HepG2 (cell line): ENCODE measurements at regions of chr15 and their contacts with region 1.

Region 1: DNA sequence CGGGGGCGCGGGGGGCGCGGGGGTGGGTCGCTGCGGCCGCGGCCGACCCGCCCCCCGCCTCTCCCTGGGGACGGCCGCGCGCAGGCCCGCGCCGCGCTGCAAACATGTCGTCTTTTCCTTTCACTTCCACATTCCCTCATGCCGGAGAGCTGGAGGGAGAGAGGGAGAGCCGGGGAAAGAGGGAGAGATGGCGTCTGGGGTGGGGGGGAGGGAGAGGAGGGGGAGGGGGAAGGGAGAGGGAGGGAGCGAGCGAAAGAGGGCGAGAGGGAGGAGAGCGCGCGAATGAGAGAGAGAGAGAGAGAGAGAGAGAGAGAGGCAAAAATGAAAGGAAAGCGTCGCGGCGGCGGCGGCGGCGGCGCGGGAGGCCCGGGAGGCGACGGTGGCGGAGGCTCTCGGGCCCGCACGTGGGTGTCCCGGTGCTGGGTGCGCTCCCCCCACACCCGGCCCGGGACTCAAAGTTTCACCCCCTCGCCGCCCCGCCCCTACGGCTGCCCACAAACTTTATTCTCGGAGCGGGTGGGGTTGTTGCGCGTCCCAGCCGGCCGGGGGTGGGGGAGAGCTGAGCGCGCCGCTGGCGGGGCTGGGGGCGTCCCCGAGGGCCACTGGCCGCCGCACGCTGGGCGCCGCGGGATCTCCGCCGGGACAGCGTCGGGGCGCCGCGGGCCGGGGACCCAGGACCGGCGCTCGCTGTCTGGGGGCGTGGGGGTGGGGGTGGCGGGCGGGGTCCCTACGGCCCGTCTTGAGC is 731 bp downstream of the ZNF710 start:
- DNase-seq: peak; percentile 29
- ATAC-seq: peak; percentile 14
- H3K4me3 ChIP-seq: peak overlapping the region; percentile 71 to 86 (median 78); a peak in 5 of 6 replicates
- H3K27ac ChIP-seq: peak overlapping the region; percentile 97
- H3K4me1 ChIP-seq: peaks cover 78% of the 10 kb centered on the region
- H3K27me3 ChIP-seq: no peaks in the 10 kb centered on the region; a peak in 1 of 5 replicates
- CTCF ChIP-seq: no peak
- EP300 ChIP-seq: no peak
- POLR2A ChIP-seq: no peak; a peak in 1 of 4 replicates
- RAD21 ChIP-seq: peak; percentile 8; the same call in 1 of the 2 replicates

Region 2: GRCh38 chr15:89893696-89894455 is 108.0 kb before region 1 on chr15 and contains the start of gene AP3S2:
- CTCF ChIA-PET with region 1: no interaction called
- POLR2A ChIA-PET with region 1: interaction called, 10 read pairs
- in situ Hi-C with region 1: no loop called
- intact Hi-C with region 1: no loop called
- DNase-seq: peak; percentile 87
- ATAC-seq: peak; percentile 93
- H3K4me3 ChIP-seq: peak within 1 kb of the TSS; percentile 81 to 89 (median 89)
- H3K27ac ChIP-seq: peak within 1 kb of the TSS; percentile 88
- H3K4me1 ChIP-seq: peaks cover 24% of the 10 kb centered on the region
- H3K27me3 ChIP-seq: no peaks in the 10 kb centered on the region; a peak in 1 of 5 replicates
- CTCF ChIP-seq: no peak; the same call in none of the 2 replicates
- EP300 ChIP-seq: 0 out of 4 replicates have a peak, but pooled peaks of 1 of the 2 experiments have one; percentile 36
- POLR2A ChIP-seq: peak; percentile 78 to 93
- RAD21 ChIP-seq: 0 out of 2 replicates have a peak, but pooled peaks have one; percentile 33
- total RNA-seq, gene AP3S2: 44.4 and 69.5 TPM in 2 replicates

Region 3: DNA sequence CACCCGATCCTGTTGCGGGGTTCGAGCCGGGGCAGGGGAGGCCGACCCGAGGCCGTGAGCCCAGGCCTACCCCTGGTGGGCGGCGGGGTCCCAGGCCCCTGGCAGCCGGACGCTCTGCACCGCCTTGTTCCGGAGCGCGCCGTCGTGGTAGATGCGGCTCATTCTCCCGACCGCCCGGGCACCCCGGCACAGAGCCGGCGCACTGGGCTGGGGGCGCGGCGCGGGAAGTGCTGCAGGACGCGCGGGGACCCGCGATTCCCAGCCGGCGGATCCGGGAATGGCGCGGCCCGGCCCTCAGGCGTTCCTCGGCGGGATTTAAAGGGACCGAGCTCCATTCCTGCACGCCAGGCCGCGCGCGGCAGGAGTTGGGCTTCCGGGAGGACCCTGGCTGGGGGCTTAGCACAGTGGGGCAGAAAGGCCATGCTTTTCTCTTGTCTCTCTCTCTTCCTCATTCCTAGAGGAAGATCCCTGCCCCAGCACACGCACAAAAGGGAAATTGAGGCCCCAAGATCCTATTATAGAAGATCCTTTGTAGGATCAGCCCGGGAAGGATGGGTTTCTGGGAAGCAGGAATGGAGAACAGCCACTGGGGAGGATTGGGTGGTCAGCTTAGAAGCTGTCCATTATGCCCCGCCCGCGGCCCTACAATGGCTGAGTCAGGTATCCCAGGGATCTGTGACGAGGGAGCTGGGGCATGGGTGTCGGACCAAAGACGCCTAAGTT is 89.0 kb before region 1 on chr15 and contains the start of gene ARPIN:
- CTCF ChIA-PET with region 1: no interaction called
- POLR2A ChIA-PET with region 1: interaction called, 14 read pairs
- in situ Hi-C with region 1: no loop called
- intact Hi-C with region 1: loop called (anchors 10 kb)
- DNase-seq: peak; percentile 16
- ATAC-seq: peak; percentile 84
- H3K4me3 ChIP-seq: peak within 1 kb of the TSS; percentile 80 to 86 (median 84)
- H3K27ac ChIP-seq: peak within 1 kb of the TSS; percentile 58
- H3K4me1 ChIP-seq: peaks cover 24% of the 10 kb centered on the region
- H3K27me3 ChIP-seq: no peaks in the 10 kb centered on the region
- CTCF ChIP-seq: no peak
- EP300 ChIP-seq: no peak
- POLR2A ChIP-seq: peak in 1 of 2 experiments; percentile 46; a peak in 3 of 4 replicates
- RAD21 ChIP-seq: no peak
- total RNA-seq, gene ARPIN: 5.0 and 5.3 TPM in 2 replicates

Region 4: GRCh38 chr15:90016721-90017120 is 14.9 kb after region 1 on chr15:
- CTCF ChIA-PET with region 1: no interaction called
- POLR2A ChIA-PET with region 1: interaction called, 23 read pairs
- in situ Hi-C with region 1: no loop called
- intact Hi-C with region 1: no loop called
- DNase-seq: no peak
- ATAC-seq: no peak
- H3K4me3 ChIP-seq: no peak overlapping the region
- H3K27ac ChIP-seq: no peak overlapping the region
- H3K4me1 ChIP-seq: peaks cover 54% of the 10 kb centered on the region
- H3K27me3 ChIP-seq: no peaks in the 10 kb centered on the region
- CTCF ChIP-seq: no peak
- EP300 ChIP-seq: no peak
- POLR2A ChIP-seq: no peak
- RAD21 ChIP-seq: no peak

Region 5: DNA sequence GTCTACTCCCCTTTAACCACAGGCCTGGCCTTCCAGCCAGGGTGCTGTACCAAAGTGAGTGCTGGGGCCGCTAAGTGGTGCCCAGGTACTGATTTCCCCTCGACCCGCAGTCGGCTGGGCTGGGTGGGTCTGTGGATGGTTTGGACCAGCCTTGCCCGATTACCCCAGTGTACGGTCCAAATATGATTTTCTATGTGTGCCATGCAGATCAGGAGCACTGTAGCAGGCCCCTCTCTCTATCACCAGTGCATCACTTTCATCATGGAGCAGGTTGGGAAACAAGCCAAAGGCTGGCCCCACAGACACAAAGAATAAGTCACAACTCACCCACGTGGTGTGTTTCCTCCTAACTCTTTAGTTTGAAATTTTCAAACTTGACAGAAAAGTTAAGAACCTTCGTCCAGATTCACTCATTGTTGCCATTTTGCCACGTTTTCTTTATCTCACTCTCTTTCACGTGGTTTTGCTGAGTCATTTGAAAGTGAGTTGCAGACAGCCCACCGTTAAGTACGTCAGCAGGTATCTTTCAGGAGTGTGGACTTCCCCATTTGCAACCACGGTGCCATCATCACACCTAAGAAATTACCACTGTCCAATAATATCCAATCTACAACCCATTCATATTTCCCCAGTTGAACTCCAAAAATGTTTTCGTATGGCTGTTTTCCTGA is 36.2 kb after region 1 on chr15:
- CTCF ChIA-PET with region 1: no interaction called
- POLR2A ChIA-PET with region 1: interaction called, 41 read pairs
- in situ Hi-C with region 1: no loop called
- intact Hi-C with region 1: loop called (anchors 5 kb)
- DNase-seq: peak; percentile 52
- ATAC-seq: no peak; the same call in 2 of the 3 replicates
- H3K4me3 ChIP-seq: no peak overlapping the region
- H3K27ac ChIP-seq: peak overlapping the region; percentile 59
- H3K4me1 ChIP-seq: peaks cover 74% of the 10 kb centered on the region
- H3K27me3 ChIP-seq: no peaks in the 10 kb centered on the region
- CTCF ChIP-seq: no peak
- EP300 ChIP-seq: no peak
- POLR2A ChIP-seq: no peak
- RAD21 ChIP-seq: no peak

Region 6: DNA sequence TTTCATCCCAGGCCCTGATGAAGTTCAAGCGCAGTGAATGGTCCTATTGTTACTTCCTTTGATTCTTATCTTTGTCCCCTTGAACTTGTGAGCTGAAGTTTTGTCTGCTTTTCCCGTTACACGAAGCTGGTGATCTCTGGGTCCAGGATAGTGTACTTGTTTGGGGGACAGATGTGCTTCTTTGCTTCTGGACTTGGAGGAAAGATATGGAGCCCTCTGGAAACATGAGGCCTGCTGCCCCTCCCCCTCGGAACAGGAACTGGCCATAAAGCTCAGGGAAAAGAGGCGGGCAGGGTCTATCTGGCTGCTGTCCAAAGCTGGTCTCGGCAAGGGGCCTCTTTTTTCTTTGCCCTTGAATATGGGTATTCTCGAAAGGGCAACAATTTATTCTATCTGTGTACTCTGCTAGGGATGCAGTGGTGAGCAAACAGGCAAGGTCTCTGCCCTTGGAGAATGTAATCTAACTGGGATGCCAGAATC is 52.8 kb after region 1 on chr15:
- CTCF ChIA-PET with region 1: no interaction called
- POLR2A ChIA-PET with region 1: interaction called, 36 read pairs
- in situ Hi-C with region 1: loop called (anchors 5 kb)
- intact Hi-C with region 1: loop called (anchors 1 kb)
- DNase-seq: peak; percentile 90
- ATAC-seq: peak; percentile 79
- H3K4me3 ChIP-seq: peak overlapping the region in 1 of 3 experiments; percentile 24; a peak in 1 of 6 replicates
- H3K27ac ChIP-seq: peak overlapping the region; percentile 40
- H3K4me1 ChIP-seq: peaks cover 43% of the 10 kb centered on the region
- H3K27me3 ChIP-seq: no peaks in the 10 kb centered on the region
- CTCF ChIP-seq: no peak
- EP300 ChIP-seq: peak in 1 of 2 experiments; percentile 56; a peak in 1 of 4 replicates
- POLR2A ChIP-seq: no peak
- RAD21 ChIP-seq: no peak

Region 7: GRCh38 chr15:90071208-90071807 is 69.5 kb after region 1 on chr15:
- CTCF ChIA-PET with region 1: no interaction called
- POLR2A ChIA-PET with region 1: no interaction called
- in situ Hi-C with region 1: no loop called
- intact Hi-C with region 1: loop called (anchors 1 kb)
- DNase-seq: peak; percentile 71
- ATAC-seq: peak; percentile 67
- H3K4me3 ChIP-seq: no peak overlapping the region
- H3K27ac ChIP-seq: no peak overlapping the region
- H3K4me1 ChIP-seq: peaks cover 22% of the 10 kb centered on the region
- H3K27me3 ChIP-seq: no peaks in the 10 kb centered on the region
- CTCF ChIP-seq: peak; percentile 74
- EP300 ChIP-seq: no peak
- POLR2A ChIP-seq: no peak
- RAD21 ChIP-seq: peak; percentile 75